T-cell (primary cell): ENCODE measurements at regions of chr4 and their contacts with region 1.

Region 1: GRCh38 chr4:146508229-146508939 is 13.4 kb downstream of the SLC10A7 start:
- DNase-seq: no peak
- ATAC-seq: no peak
- H3K4me3 ChIP-seq: no peak overlapping the region
- H3K4me3 Mint-ChIP-seq: no peak overlapping the region
- H3K27ac ChIP-seq: no peak overlapping the region
- H3K27ac Mint-ChIP-seq: no peak overlapping the region
- H3K4me1 ChIP-seq: no peaks in the 10 kb centered on the region
- H3K4me1 Mint-ChIP-seq: no peaks in the 10 kb centered on the region
- H3K27me3 ChIP-seq: no peaks in the 10 kb centered on the region
- H3K27me3 Mint-ChIP-seq: no peaks in the 10 kb centered on the region

Region 2: GRCh38 chr4:146534178-146534577 is 25.8 kb after region 1 on chr4:
- CTCF ChIA-PET with region 1: no interaction called
- POLR2A ChIA-PET with region 1: interaction called in 1 of 2 experiments, 11 read pairs
- DNase-seq: no peak
- ATAC-seq: no peak
- H3K4me3 ChIP-seq: no peak overlapping the region
- H3K4me3 Mint-ChIP-seq: no peak overlapping the region
- H3K27ac ChIP-seq: no peak overlapping the region
- H3K27ac Mint-ChIP-seq: no peak overlapping the region
- H3K4me1 ChIP-seq: no peaks in the 10 kb centered on the region
- H3K4me1 Mint-ChIP-seq: no peaks in the 10 kb centered on the region
- H3K27me3 ChIP-seq: peaks cover 0 to 3% of the 10 kb centered on the region in 2 experiments
- H3K27me3 Mint-ChIP-seq: peaks cover 0 to 3% of the 10 kb centered on the region in 2 donors